Endothelial cell of umbilical vein (primary cell): ENCODE measurements at regions of chr12 and their contacts with region 1.

Region 1: DNA sequence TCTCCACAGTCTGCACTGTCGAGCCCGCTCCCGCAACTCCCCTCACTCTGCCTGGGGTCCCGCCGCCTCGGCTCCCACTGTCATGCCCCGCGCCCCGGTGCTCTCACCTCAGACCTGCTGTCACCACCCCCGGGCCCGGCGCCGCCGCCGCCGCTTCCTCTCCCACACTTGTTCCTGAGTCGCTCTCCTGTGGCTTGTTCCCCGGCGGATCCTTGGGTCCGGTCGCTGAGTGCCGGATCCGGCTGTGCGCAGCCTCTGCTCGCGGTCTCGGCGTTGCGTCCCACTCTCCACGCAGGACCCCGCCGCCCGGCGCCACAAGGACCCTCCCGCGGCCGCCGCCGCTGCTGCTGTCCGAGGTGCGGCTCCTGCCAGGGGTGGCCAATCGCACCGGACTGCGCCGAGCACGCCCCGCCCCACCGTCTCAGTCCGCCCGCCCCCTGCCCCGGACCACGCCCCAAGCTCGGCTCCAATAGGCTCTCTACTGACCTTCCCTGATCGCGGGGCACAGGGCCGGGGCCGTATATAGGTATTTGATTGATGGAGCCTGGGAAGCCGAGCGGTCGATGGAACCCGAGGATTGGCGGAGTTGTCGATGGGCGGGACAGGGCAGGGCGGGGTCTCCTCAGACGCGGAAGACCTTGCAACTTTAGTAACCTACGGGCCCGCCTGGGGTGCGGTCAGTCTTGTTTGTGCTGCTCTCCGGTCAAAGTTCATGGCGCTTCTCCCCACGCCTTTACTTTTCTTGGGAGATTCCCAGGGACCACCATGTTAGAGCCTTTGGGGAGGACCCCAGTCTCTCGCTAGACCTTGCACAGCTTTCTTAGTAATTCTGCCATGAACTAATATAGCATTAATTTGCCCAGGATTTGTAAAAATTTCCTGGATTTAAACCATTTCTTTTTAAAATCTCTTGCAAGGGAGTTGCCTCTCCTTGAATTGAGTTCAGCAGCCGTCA is at the start of gene TAOK3:
- DNase-seq: peak; percentile 98
- H3K4me3 ChIP-seq: peak within 1 kb of the TSS; percentile 78 to 95 (median 79)
- H3K27ac ChIP-seq: peak within 1 kb of the TSS; percentile 17
- H3K4me1 ChIP-seq: peaks cover 18% of the 10 kb centered on the region
- H3K27me3 ChIP-seq: no peaks in the 10 kb centered on the region
- CTCF ChIP-seq: no peak
- POLR2A ChIP-seq: peak; percentile 97
- total RNA-seq, gene TAOK3: 23.1 and 28.9 TPM in 2 replicates

Region 2: GRCh38 chr12:117874842-117875434 is 497.9 kb before region 1 on chr12:
- CTCF ChIA-PET with region 1: interaction called, 27 read pairs
- POLR2A ChIA-PET with region 1: no interaction called
- dilution Hi-C with region 1: no loop called
- intact Hi-C with region 1: loop called (anchors 1 kb)
- DNase-seq: peak; percentile 56
- H3K4me3 ChIP-seq: no peak overlapping the region
- H3K27ac ChIP-seq: no peak overlapping the region
- H3K4me1 ChIP-seq: no peaks in the 10 kb centered on the region
- H3K27me3 ChIP-seq: peaks cover 4 to 5% of the 10 kb centered on the region in 2 experiments
- CTCF ChIP-seq: peak; percentile 79 to 83
- POLR2A ChIP-seq: no peak

Region 3: DNA sequence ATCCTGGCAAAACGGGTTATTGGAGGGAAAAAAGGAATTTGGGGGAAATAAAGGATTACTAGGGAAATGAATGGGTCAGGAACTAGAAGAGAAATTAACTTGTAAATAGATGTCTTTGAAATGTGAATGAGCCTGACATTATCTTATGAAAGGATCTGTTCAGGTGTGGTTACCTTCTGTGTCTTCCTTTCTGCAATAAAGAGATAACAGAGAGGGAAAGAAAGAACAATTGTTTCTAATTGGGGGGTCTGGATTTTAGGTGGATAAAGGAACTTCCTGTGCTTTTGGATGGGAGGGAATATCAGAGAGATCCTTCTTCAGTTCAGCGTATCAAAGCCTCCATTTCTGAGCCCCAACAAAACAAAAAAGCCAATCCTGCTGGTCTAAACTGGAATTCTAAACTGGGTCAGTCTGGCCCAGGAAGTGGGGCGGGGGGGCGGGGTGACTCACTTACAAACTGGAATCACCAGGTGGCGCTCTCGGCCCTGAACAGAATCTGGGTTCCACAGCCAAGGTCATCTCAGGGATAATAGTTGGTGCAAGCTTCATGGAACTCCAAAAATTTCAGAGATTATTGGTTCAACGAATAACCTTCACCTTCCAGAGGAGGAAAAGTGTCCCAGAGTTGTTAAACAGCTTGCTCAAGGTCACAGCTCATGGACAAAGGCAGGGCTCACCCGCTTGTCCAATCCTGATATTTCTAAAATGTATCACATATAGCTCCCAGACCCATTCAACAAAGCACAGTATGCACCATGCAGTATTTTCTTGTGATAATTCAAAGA is 252.0 kb before region 1 on chr12:
- CTCF ChIA-PET with region 1: interaction called, 60 read pairs
- POLR2A ChIA-PET with region 1: no interaction called
- dilution Hi-C with region 1: no loop called
- intact Hi-C with region 1: loop called (anchors 1 kb)
- DNase-seq: peak; percentile 52
- H3K4me3 ChIP-seq: no peak overlapping the region
- H3K27ac ChIP-seq: peak overlapping the region; percentile 24
- H3K4me1 ChIP-seq: no peaks in the 10 kb centered on the region
- H3K27me3 ChIP-seq: no peaks in the 10 kb centered on the region
- CTCF ChIP-seq: peak; percentile 22 to 67
- POLR2A ChIP-seq: no peak

Region 4: GRCh38 chr12:118183705-118184104 is 189.1 kb before region 1 on chr12:
- CTCF ChIA-PET with region 1: interaction called, 262 read pairs
- POLR2A ChIA-PET with region 1: interaction called, 4 read pairs
- dilution Hi-C with region 1: no loop called
- intact Hi-C with region 1: loop called (anchors 1 kb)
- DNase-seq: peak; percentile 63
- H3K4me3 ChIP-seq: no peak overlapping the region
- H3K27ac ChIP-seq: peak overlapping the region; percentile 25
- H3K4me1 ChIP-seq: peaks cover 33% of the 10 kb centered on the region
- H3K27me3 ChIP-seq: no peaks in the 10 kb centered on the region
- CTCF ChIP-seq: no peak
- POLR2A ChIP-seq: no peak

Region 5: DNA sequence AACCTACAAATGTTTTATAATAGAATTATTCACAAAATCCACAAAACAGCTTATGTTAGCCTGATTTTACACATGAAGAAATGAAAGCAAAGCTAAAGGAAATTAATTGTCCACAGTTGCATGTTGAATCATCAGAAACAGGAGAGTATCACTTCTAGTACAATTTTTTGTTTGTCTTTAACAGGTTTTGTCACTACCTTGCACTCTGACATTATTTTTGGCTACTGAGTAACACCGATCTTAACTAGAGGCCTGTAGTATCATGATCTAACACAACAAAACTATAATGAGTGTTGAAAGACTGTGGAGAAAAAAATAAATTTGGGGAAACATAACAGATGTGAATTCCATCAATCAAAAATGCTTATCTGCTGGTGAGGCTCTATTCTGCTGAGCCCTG is 60.2 kb before region 1 on chr12:
- CTCF ChIA-PET with region 1: interaction called, 23 read pairs
- POLR2A ChIA-PET with region 1: interaction called, 6 read pairs
- dilution Hi-C with region 1: no loop called
- intact Hi-C with region 1: loop called (anchors 1 kb)
- DNase-seq: no peak
- H3K4me3 ChIP-seq: no peak overlapping the region
- H3K27ac ChIP-seq: no peak overlapping the region
- H3K4me1 ChIP-seq: peaks cover 7% of the 10 kb centered on the region
- H3K27me3 ChIP-seq: no peaks in the 10 kb centered on the region
- CTCF ChIP-seq: no peak
- POLR2A ChIP-seq: no peak